Caco-2 (cell line): ENCODE measurements at regions of chr12 and their contacts with region 1.

Region 1: GRCh38 chr12:17151917-17152316 is 546.0 kb upstream of the LMO3 start:
- DNase-seq: peak in 1 of 2 experiments; percentile 6
- H3K4me3 ChIP-seq: no peak overlapping the region
- H3K4me3 Mint-ChIP-seq: no peak overlapping the region
- H3K27ac Mint-ChIP-seq: no peak overlapping the region
- H3K4me1 ChIP-seq: peaks cover 8% of the 10 kb centered on the region
- H3K4me1 Mint-ChIP-seq: peaks cover 12% of the 10 kb centered on the region
- H3K27me3 ChIP-seq: no peaks in the 10 kb centered on the region
- H3K27me3 Mint-ChIP-seq: no peaks in the 10 kb centered on the region
- CTCF ChIP-seq: no peak

Region 2: GRCh38 chr12:17035372-17035771 is 116.5 kb before region 1 on chr12:
- CTCF ChIA-PET with region 1: no interaction called
- POLR2A ChIA-PET with region 1: no interaction called
- intact Hi-C with region 1: no loop called
- DNase-seq: no peak
- H3K4me3 ChIP-seq: no peak overlapping the region
- H3K4me3 Mint-ChIP-seq: no peak overlapping the region
- H3K27ac Mint-ChIP-seq: no peak overlapping the region
- H3K4me1 ChIP-seq: peaks cover 16% of the 10 kb centered on the region
- H3K4me1 Mint-ChIP-seq: peaks cover 13% of the 10 kb centered on the region
- H3K27me3 ChIP-seq: no peaks in the 10 kb centered on the region
- H3K27me3 Mint-ChIP-seq: peaks cover 3% of the 10 kb centered on the region
- CTCF ChIP-seq: no peak

Region 3: DNA sequence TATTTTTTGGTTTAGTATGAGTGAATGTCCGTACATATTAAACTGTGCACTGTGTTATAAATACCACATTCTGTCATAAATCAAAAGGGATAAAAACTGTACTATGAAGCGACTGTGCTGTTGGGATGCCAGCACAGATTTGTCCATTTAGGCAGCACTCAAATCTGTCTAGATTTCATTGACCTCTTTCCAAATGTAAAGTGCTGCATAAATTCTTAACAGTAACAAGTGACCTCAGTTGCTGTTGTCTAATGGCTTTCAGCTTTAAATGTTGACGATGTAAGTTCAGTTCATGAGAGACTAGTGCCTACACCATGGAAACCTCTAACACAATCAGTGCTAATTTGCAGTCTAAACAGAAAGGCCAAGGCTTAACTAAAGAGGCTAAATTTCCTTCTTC is 14.5 kb before region 1 on chr12:
- CTCF ChIA-PET with region 1: no interaction called
- POLR2A ChIA-PET with region 1: no interaction called
- intact Hi-C with region 1: loop called (anchors 2 kb)
- DNase-seq: no peak
- H3K4me3 ChIP-seq: no peak overlapping the region
- H3K4me3 Mint-ChIP-seq: no peak overlapping the region
- H3K27ac Mint-ChIP-seq: no peak overlapping the region
- H3K4me1 ChIP-seq: no peaks in the 10 kb centered on the region; the same call in 1 of the 2 replicates
- H3K4me1 Mint-ChIP-seq: peaks cover 13% of the 10 kb centered on the region
- H3K27me3 ChIP-seq: no peaks in the 10 kb centered on the region
- H3K27me3 Mint-ChIP-seq: no peaks in the 10 kb centered on the region
- CTCF ChIP-seq: no peak